ENCODE measurements at regions of chr7 and their contacts with region 1.

Region 1: GRCh38 chr7:122219253-122219865 is 75.3 kb upstream of the AASS start:
- DNase-seq: peak; percentile 26
- ATAC-seq: peak; percentile 65; the same call in 1 of the 2 replicates
- H3K4me3 ChIP-seq: no peak overlapping the region
- H3K27ac ChIP-seq: no peak overlapping the region
- H3K4me1 ChIP-seq: no peaks in the 10 kb centered on the region
- H3K27me3 ChIP-seq: no peaks in the 10 kb centered on the region
- CTCF ChIP-seq: peak; percentile 68
- POLR2A ChIP-seq: no peak
- RAD21 ChIP-seq: peak; percentile 61

Region 2: DNA sequence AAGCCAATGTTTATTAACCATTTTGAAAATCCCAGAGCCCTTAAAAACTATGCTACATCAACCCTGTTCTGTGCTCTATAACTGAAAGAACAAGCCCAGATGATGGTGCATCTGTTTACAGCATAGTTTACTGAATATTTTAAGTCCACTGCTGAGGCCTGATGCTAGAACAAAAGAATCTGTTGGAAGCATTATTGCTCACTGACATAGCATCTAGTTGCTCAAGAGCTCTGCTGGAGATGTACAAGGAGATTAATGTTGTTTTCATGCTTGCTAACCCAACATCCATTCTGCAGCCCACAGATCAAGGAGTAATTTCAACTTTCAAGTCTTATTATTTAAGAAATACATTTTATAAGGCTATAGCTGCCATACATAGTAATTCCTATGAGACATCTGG is 266.5 kb after region 1 on chr7:
- CTCF ChIA-PET with region 1: no interaction called
- POLR2A ChIA-PET with region 1: no interaction called
- dilution Hi-C with region 1: no loop called
- in situ Hi-C with region 1: no loop called
- intact Hi-C with region 1: no loop called
- DNase-seq: no peak
- ATAC-seq: no peak
- H3K4me3 ChIP-seq: no peak overlapping the region
- H3K27ac ChIP-seq: no peak overlapping the region
- H3K4me1 ChIP-seq: no peaks in the 10 kb centered on the region
- H3K27me3 ChIP-seq: no peaks in the 10 kb centered on the region
- CTCF ChIP-seq: no peak
- POLR2A ChIP-seq: no peak
- RAD21 ChIP-seq: no peak

Region 3: DNA sequence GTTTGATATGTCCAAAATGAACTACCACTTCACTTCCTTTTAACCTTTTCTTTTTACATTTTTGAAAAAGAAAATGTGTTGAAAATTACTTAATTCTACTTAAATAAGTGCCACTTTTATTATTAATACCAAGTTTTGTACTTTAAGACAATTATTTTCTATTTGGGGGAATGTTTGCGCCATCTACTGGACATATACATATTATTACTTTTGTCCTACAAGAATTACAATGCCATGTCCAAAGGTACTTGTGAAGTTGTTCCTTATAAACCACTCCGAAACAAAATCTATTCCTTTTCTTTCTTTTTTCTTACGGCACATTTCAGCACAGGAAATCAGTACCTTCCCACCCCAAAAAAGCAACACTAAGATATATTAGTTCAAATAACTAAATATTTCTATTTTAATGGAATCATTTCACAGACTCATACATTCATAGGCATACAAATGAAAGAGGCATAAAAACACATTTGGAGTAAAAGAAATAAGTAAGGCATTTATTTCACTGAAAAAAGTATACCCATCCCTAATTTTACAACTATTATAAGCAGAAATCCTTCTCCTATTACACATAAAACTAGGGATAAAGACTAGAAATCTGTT is 309.6 kb after region 1 on chr7:
- CTCF ChIA-PET with region 1: interaction called, 4 read pairs
- POLR2A ChIA-PET with region 1: no interaction called
- dilution Hi-C with region 1: no loop called
- in situ Hi-C with region 1: loop called (anchors 25 kb)
- intact Hi-C with region 1: loop called (anchors 1 kb)
- DNase-seq: peak; percentile 37
- ATAC-seq: no peak
- H3K4me3 ChIP-seq: no peak overlapping the region
- H3K27ac ChIP-seq: no peak overlapping the region
- H3K4me1 ChIP-seq: no peaks in the 10 kb centered on the region
- H3K27me3 ChIP-seq: no peaks in the 10 kb centered on the region
- CTCF ChIP-seq: peak; percentile 56
- POLR2A ChIP-seq: no peak
- RAD21 ChIP-seq: peak; percentile 34

Measured in IMR-90 (cell line).